Panc1 (cell line): ENCODE measurements at regions of chr1 and their contacts with region 1.

Region 1: GRCh38 chr1:172629638-172630037 is 29.3 kb upstream of the FASLG start:
- DNase-seq: no peak
- ATAC-seq: no peak
- H3K4me3 ChIP-seq: no peak overlapping the region
- H3K27ac ChIP-seq: no peak overlapping the region
- H3K4me1 ChIP-seq: no peaks in the 10 kb centered on the region
- H3K27me3 ChIP-seq: no peaks in the 10 kb centered on the region
- CTCF ChIP-seq: no peak

Region 2: GRCh38 chr1:171532520-171532919 is 1097.1 kb before region 1 on chr1:
- CTCF ChIA-PET with region 1: no interaction called
- POLR2A ChIA-PET with region 1: interaction called, 11 read pairs
- in situ Hi-C with region 1: no loop called
- intact Hi-C with region 1: no loop called
- DNase-seq: no peak
- ATAC-seq: no peak
- H3K4me3 ChIP-seq: no peak overlapping the region
- H3K27ac ChIP-seq: no peak overlapping the region
- H3K4me1 ChIP-seq: no peaks in the 10 kb centered on the region
- H3K27me3 ChIP-seq: no peaks in the 10 kb centered on the region
- CTCF ChIP-seq: no peak

Region 3: GRCh38 chr1:172269644-172270043 is 360.0 kb before region 1 on chr1:
- CTCF ChIA-PET with region 1: no interaction called
- POLR2A ChIA-PET with region 1: no interaction called
- in situ Hi-C with region 1: no loop called
- intact Hi-C with region 1: no loop called
- DNase-seq: no peak
- ATAC-seq: no peak
- H3K4me3 ChIP-seq: no peak overlapping the region
- H3K27ac ChIP-seq: peak overlapping the region; percentile 78
- H3K4me1 ChIP-seq: peaks cover 19% of the 10 kb centered on the region
- H3K27me3 ChIP-seq: no peaks in the 10 kb centered on the region
- CTCF ChIP-seq: no peak

Region 4: GRCh38 chr1:172515927-172516326 is 113.7 kb before region 1 on chr1:
- CTCF ChIA-PET with region 1: no interaction called
- POLR2A ChIA-PET with region 1: no interaction called
- in situ Hi-C with region 1: no loop called
- intact Hi-C with region 1: no loop called
- DNase-seq: no peak
- ATAC-seq: no peak
- H3K4me3 ChIP-seq: no peak overlapping the region
- H3K27ac ChIP-seq: no peak overlapping the region
- H3K4me1 ChIP-seq: no peaks in the 10 kb centered on the region
- H3K27me3 ChIP-seq: no peaks in the 10 kb centered on the region; the same call in 1 of the 2 replicates
- CTCF ChIP-seq: no peak